IMR-90 (cell line): ENCODE measurements at regions of chr3 and their contacts with region 1.

Region 1: GRCh38 chr3:143056372-143056771 is 55.0 kb downstream of the U2SURP start:
- DNase-seq: no peak
- ATAC-seq: no peak
- H3K4me3 ChIP-seq: no peak overlapping the region
- H3K27ac ChIP-seq: no peak overlapping the region
- H3K4me1 ChIP-seq: no peaks in the 10 kb centered on the region
- H3K27me3 ChIP-seq: no peaks in the 10 kb centered on the region
- CTCF ChIP-seq: no peak
- POLR2A ChIP-seq: no peak
- RAD21 ChIP-seq: no peak

Region 2: DNA sequence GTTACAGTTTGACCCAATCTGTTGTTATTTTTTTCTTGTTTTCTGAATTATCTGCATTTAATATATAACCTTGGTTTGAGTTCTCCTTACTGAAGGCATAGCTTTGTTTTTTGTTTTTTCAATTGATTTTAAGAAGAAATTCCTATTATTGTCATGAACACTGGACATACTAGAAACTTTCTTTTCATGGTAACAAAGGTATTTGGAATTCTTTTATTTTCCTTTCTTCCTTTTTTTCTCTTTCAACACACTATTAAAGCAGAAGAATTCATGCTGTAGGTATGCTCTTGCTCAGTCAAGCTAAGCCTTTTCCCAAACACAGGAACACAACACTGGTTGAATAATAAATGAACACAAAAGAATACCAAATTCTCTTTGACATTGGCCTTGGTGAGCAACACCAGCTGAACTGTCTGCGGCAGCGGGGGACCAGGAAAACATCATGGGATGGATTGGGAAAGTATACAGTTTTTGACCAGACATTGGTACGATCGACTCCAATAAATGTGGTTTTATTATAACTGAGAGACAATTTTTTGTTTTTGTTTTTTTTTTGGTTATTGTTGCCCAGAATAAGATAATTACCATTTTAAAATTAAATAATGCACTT is 31.9 kb before region 1 on chr3:
- CTCF ChIA-PET with region 1: interaction called, 4 read pairs
- POLR2A ChIA-PET with region 1: no interaction called
- dilution Hi-C with region 1: no loop called
- in situ Hi-C with region 1: no loop called
- intact Hi-C with region 1: loop called (anchors 5 kb)
- DNase-seq: no peak
- ATAC-seq: no peak
- H3K4me3 ChIP-seq: no peak overlapping the region
- H3K27ac ChIP-seq: no peak overlapping the region
- H3K4me1 ChIP-seq: no peaks in the 10 kb centered on the region
- H3K27me3 ChIP-seq: no peaks in the 10 kb centered on the region
- CTCF ChIP-seq: no peak
- POLR2A ChIP-seq: no peak
- RAD21 ChIP-seq: no peak